PC-3 (cell line): ENCODE measurements at regions of chr7 and their contacts with region 1.

Region 1: GRCh38 chr7:55132890-55133551 is 114.2 kb downstream of the EGFR start:
- DNase-seq: peak; percentile 98
- ATAC-seq: peak; percentile 76
- H3K4me3 ChIP-seq: peak overlapping the region; percentile 26; the same call in 1 of the 2 replicates
- H3K27ac ChIP-seq: peak overlapping the region; percentile 99
- H3K4me1 ChIP-seq: peaks cover 79% of the 10 kb centered on the region
- H3K27me3 ChIP-seq: no peaks in the 10 kb centered on the region
- CTCF ChIP-seq: no peak

Region 2: DNA sequence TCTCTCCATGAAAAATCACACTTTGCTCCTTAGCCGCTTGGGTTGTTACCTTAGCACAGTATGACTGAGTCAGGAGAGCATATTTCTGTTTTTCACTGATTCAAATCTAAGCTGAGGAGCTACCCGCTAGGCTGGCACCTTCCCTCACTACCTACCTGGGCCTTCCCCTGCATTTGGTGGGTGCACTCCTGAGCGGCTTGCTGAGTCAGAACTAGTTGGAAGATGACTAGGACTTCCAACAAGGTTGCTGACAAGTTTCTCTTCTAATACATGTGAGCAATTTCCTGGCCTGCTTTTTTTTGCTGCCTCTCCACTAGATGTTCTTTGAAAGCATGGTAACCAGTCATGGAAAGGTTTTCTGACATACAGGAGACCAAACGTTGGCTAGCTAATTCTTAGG is 330.2 kb before region 1 on chr7:
- CTCF ChIA-PET with region 1: no interaction called
- POLR2A ChIA-PET with region 1: no interaction called
- intact Hi-C with region 1: no loop called
- DNase-seq: peak; percentile 71
- ATAC-seq: peak; percentile 83
- H3K4me3 ChIP-seq: no peak overlapping the region
- H3K27ac ChIP-seq: no peak overlapping the region
- H3K4me1 ChIP-seq: peaks cover 11% of the 10 kb centered on the region
- H3K27me3 ChIP-seq: no peaks in the 10 kb centered on the region
- CTCF ChIP-seq: no peak

Region 3: DNA sequence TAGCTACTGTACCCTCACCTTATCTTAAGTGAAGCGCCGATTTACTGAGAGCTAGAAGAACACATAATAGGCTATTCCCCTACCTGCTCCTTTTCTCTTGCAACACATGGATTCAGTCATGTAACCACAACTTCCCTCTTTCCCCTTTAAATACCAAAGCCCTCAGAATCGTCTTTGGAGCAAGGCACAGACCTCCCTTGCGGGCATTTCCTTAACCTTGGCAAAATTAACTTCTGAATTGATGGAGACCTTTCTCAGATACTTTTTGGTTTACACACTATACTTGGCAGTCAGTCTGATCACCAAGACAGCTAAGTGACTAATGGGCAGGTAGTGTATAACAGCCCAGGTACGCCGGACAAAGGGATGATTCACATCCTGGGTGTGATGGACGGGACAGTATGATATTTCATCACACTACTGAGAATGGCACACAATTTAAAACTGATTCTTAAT is 301.3 kb before region 1 on chr7:
- CTCF ChIA-PET with region 1: no interaction called
- POLR2A ChIA-PET with region 1: no interaction called
- intact Hi-C with region 1: loop called (anchors 2 kb)
- DNase-seq: peak; percentile 95
- ATAC-seq: peak; percentile 87
- H3K4me3 ChIP-seq: peak overlapping the region; percentile 60
- H3K27ac ChIP-seq: peak overlapping the region; percentile 100
- H3K4me1 ChIP-seq: peaks cover 31% of the 10 kb centered on the region
- H3K27me3 ChIP-seq: no peaks in the 10 kb centered on the region
- CTCF ChIP-seq: no peak

Region 4: DNA sequence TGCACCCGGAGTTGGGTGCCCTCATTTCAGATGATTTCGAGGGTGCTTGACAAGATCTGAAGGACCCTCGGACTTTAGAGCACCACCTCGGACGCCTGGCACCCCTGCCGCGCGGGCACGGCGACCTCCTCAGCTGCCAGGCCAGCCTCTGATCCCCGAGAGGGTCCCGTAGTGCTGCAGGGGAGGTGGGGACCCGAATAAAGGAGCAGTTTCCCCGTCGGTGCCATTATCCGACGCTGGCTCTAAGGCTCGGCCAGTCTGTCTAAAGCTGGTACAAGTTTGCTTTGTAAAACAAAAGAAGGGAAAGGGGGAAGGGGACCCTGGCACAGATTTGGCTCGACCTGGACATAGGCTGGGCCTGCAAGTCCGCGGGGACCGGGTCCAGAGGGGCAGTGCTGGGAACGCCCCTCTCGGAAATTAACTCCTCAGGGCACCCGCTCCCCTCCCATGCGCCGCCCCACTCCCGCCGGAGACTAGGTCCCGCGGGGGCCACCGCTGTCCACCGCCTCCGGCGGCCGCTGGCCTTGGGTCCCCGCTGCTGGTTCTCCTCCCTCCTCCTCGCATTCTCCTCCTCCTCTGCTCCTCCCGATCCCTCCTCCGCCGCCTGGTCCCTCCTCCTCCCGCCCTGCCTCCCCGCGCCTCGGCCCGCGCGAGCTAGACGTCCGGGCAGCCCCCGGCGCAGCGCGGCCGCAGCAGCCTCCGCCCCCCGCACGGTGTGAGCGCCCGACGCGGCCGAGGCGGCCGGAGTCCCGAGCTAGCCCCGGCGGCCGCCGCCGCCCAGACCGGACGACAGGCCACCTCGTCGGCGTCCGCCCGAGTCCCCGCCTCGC is 114.4 kb before region 1 on chr7 and contains the start of gene EGFR:
- CTCF ChIA-PET with region 1: no interaction called
- POLR2A ChIA-PET with region 1: interaction called, 5 read pairs
- intact Hi-C with region 1: loop called (anchors 1 kb)
- DNase-seq: peak; percentile 76
- ATAC-seq: peak; percentile 80
- H3K4me3 ChIP-seq: peak within 1 kb of the TSS; percentile 90
- H3K27ac ChIP-seq: peak within 1 kb of the TSS; percentile 69
- H3K4me1 ChIP-seq: peaks cover 27% of the 10 kb centered on the region
- H3K27me3 ChIP-seq: no peaks in the 10 kb centered on the region
- CTCF ChIP-seq: no peak
- total RNA-seq, gene EGFR: 50.0 and 64.6 TPM in 2 replicates

Region 5: GRCh38 chr7:55086413-55087201 is 46.4 kb before region 1 on chr7:
- CTCF ChIA-PET with region 1: interaction called, 11 read pairs
- POLR2A ChIA-PET with region 1: interaction called, 6 read pairs
- intact Hi-C with region 1: loop called (anchors 1 kb)
- DNase-seq: peak; percentile 78
- ATAC-seq: peak; percentile 84
- H3K4me3 ChIP-seq: peak overlapping the region; percentile 63
- H3K27ac ChIP-seq: peak overlapping the region; percentile 99
- H3K4me1 ChIP-seq: peaks cover 44% of the 10 kb centered on the region
- H3K27me3 ChIP-seq: no peaks in the 10 kb centered on the region
- CTCF ChIP-seq: no peak

Region 6: GRCh38 chr7:55185941-55186609 is 53.1 kb after region 1 on chr7:
- CTCF ChIA-PET with region 1: interaction called, 6 read pairs
- POLR2A ChIA-PET with region 1: no interaction called
- intact Hi-C with region 1: loop called (anchors 1 kb)
- DNase-seq: peak; percentile 97
- ATAC-seq: peak; percentile 97
- H3K4me3 ChIP-seq: no peak overlapping the region
- H3K27ac ChIP-seq: peak overlapping the region; percentile 89
- H3K4me1 ChIP-seq: peaks cover 27% of the 10 kb centered on the region
- H3K27me3 ChIP-seq: no peaks in the 10 kb centered on the region
- CTCF ChIP-seq: no peak